A549 (cell line): ENCODE measurements at regions of chr15 and their contacts with region 1.

Region 1: GRCh38 chr15:92924216-92924615 is 24.1 kb downstream of the CHD2 start:
- DNase-seq: no peak
- ATAC-seq: no peak
- H3K4me3 ChIP-seq: no peak overlapping the region
- H3K27ac ChIP-seq: no peak overlapping the region
- H3K4me1 ChIP-seq: peaks cover 41% of the 10 kb centered on the region
- CTCF ChIP-seq: no peak
- EP300 ChIP-seq: no peak
- POLR2A ChIP-seq: no peak
- RAD21 ChIP-seq: no peak

Region 2: DNA sequence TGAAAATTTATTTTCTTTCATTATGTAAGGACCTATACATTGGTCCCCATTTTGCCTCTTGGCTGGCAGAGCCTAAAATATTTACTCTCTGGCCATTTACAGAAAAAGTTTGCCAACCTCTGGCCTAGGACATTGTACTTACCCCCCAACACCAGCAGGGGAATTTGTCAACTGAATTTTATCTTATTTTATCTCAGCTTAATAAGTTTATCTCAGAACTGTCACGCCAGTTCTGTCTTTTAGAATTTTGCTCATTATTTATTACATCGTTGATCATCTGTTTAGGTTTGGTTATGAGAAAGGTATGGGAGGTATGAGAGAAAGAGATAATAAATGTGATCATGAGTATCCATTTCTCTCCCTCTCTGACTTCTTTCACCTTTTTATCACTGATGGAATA is 14.2 kb after region 1 on chr15:
- CTCF ChIA-PET with region 1: interaction called, 14 read pairs
- POLR2A ChIA-PET with region 1: no interaction called
- DNase-seq: no peak
- ATAC-seq: peak in 1 of 2 experiments; percentile 54; a peak in 3 of 6 replicates
- H3K4me3 ChIP-seq: no peak overlapping the region
- H3K27ac ChIP-seq: no peak overlapping the region
- H3K4me1 ChIP-seq: no peaks in the 10 kb centered on the region
- CTCF ChIP-seq: no peak
- EP300 ChIP-seq: no peak
- POLR2A ChIP-seq: no peak
- RAD21 ChIP-seq: no peak

Region 3: GRCh38 chr15:93200081-93200836 is 276.0 kb after region 1 on chr15:
- CTCF ChIA-PET with region 1: no interaction called
- POLR2A ChIA-PET with region 1: no interaction called
- DNase-seq: no peak
- ATAC-seq: no peak
- H3K4me3 ChIP-seq: no peak overlapping the region
- H3K27ac ChIP-seq: no peak overlapping the region
- H3K4me1 ChIP-seq: no peaks in the 10 kb centered on the region
- CTCF ChIP-seq: no peak
- EP300 ChIP-seq: no peak
- POLR2A ChIP-seq: no peak
- RAD21 ChIP-seq: no peak

Region 4: DNA sequence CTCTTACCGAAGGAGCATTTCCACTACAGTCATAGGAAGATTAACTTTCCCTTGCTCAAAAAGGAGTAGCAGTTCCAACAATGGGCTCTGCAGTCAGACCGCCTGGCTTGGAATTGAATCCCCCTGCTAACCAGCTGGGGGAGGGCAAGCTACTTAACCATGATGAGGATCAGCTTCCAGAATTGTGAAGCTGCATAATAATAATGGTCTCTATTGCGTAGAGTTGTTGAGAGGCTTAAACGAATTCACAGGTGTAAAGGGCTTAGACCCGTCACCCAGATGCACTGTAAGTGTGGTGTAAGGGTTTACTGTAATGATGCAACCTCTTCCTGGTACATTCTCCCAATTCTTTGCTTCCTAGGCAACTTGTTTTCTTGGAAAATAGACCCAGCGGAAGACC is 350.0 kb after region 1 on chr15:
- CTCF ChIA-PET with region 1: no interaction called
- POLR2A ChIA-PET with region 1: no interaction called
- DNase-seq: no peak
- ATAC-seq: no peak
- H3K4me3 ChIP-seq: no peak overlapping the region
- H3K27ac ChIP-seq: no peak overlapping the region
- H3K4me1 ChIP-seq: no peaks in the 10 kb centered on the region
- CTCF ChIP-seq: no peak
- EP300 ChIP-seq: no peak
- POLR2A ChIP-seq: no peak
- RAD21 ChIP-seq: no peak